ENCODE measurements at regions of chr5 and their contacts with region 1.

Region 1: DNA sequence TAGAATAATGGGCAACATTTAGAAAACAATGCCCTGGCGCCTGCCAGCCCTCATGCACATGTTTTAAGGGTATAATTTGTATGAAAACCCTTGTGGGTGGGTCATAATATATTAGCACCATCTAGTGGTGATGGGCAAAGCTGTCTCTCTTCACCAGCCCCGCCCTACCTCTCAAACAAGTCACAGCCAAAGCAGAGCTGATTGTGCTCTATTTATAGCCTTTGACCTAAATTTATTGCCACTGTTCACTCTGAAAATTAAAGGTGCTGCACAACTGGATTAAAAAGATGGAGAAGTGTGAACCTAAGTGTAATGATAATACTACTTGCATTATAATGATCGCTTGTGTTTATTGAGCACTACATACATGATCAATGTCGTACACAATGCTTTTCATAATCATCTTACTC is 131.9 kb upstream of the ANKH start:
- DNase-seq: peak; percentile 68
- H3K4me3 Mint-ChIP-seq: no peak overlapping the region
- H3K27ac Mint-ChIP-seq: no peak overlapping the region
- H3K4me1 Mint-ChIP-seq: peaks cover 6% of the 10 kb centered on the region
- H3K27me3 Mint-ChIP-seq: peaks cover 2% of the 10 kb centered on the region

Region 2: GRCh38 chr5:14364576-14365472 is 638.7 kb before region 1 on chr5:
- CTCF ChIA-PET with region 1: no interaction called
- POLR2A ChIA-PET with region 1: no interaction called
- intact Hi-C with region 1: loop called (anchors 5 kb)
- DNase-seq: peak; percentile 19
- H3K4me3 Mint-ChIP-seq: no peak overlapping the region
- H3K27ac Mint-ChIP-seq: no peak overlapping the region
- H3K4me1 Mint-ChIP-seq: peaks cover 18% of the 10 kb centered on the region
- H3K27me3 Mint-ChIP-seq: no peaks in the 10 kb centered on the region

Region 3: DNA sequence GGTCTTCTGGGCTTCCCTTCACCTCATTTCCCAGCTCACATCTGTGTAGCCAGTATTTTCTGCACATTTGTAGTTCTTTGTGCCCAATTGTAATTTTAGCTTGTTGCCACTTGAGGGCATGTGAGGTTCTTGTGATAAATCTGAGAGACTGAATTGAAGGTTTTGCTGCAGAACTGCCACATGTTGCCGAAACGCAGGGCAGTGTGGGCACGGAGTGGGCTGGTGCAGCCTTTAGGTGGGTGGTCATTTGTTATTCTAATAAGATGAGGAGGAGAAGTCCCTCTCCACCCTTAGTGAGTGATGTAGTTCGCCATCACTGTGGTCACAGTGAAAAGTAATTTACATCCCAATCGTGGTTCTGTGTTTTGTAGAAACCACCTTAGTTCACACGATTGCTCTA is 317.8 kb before region 1 on chr5:
- CTCF ChIA-PET with region 1: interaction called, 42 read pairs
- POLR2A ChIA-PET with region 1: no interaction called
- intact Hi-C with region 1: loop called (anchors 1 kb)
- DNase-seq: peak; percentile 71
- H3K4me3 Mint-ChIP-seq: no peak overlapping the region
- H3K27ac Mint-ChIP-seq: peak overlapping the region; percentile 59
- H3K4me1 Mint-ChIP-seq: peaks cover 15% of the 10 kb centered on the region
- H3K27me3 Mint-ChIP-seq: no peaks in the 10 kb centered on the region

Region 4: DNA sequence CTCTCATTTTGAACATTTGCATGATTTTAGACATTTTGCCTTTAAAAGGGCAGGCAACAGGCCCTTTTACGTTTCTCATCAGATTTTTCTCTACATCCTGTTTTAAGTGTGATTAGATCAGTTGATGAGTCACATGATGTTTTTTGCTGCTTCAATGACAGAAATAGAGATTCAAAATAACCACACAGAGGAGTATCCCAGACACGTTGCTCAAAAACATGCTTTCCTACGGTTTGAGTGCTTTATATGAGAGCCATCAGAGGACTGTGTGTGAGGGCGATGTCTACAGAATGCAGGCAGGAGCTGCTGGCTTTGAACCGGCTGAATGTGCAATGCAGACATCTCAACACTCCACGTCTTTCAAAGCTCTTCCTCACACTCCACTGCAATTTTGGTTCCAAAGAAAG is 296.9 kb before region 1 on chr5:
- CTCF ChIA-PET with region 1: interaction called, 6 read pairs
- POLR2A ChIA-PET with region 1: no interaction called
- intact Hi-C with region 1: loop called (anchors 5 kb)
- DNase-seq: peak; percentile 56
- H3K4me3 Mint-ChIP-seq: peak overlapping the region; percentile 57
- H3K27ac Mint-ChIP-seq: peak overlapping the region; percentile 94
- H3K4me1 Mint-ChIP-seq: peaks cover 74% of the 10 kb centered on the region
- H3K27me3 Mint-ChIP-seq: no peaks in the 10 kb centered on the region

Region 5: GRCh38 chr5:14790220-14790619 is 213.3 kb before region 1 on chr5:
- CTCF ChIA-PET with region 1: no interaction called
- POLR2A ChIA-PET with region 1: no interaction called
- intact Hi-C with region 1: no loop called
- DNase-seq: no peak
- H3K4me3 Mint-ChIP-seq: no peak overlapping the region
- H3K27ac Mint-ChIP-seq: no peak overlapping the region
- H3K4me1 Mint-ChIP-seq: peaks cover 35% of the 10 kb centered on the region
- H3K27me3 Mint-ChIP-seq: no peaks in the 10 kb centered on the region

Region 6: DNA sequence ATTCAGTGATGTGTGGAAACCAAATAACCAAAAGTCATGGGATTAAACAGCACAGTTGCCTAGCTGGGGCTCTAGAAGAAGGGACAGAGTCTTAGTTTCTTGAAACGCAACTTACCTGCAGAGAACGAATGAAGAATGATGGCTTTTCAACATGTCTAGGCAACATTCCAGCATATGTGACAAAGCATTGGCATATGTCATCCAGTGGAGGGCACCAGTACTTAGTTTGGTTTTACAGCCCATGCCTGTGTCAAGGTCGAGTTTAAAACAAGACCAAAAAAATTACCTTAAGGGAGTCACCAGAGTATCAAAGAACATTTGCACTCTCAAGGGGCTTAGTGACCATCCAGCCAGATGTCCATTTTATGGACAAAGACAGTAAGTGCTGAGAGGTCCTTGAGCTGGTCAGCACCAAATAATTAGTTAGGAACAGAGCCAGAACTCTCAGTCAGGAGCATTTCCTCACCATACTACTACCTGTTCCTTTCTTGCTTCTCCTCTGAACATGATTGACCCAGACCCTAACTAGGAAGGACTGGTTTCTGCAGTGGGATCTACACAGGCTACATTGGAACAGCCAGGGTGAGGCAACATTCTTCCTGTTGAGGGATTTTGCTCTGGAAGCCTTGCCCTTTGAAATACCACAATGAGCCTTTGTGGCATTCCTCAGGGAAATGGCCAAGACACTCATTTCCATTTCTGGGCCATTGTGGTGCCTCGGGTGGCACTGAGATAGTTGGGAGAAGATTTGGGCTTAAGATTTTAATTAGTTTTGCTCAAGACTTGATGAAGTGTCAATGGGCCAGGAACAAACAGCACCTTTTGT is 56.5 kb before region 1 on chr5:
- CTCF ChIA-PET with region 1: interaction called, 6 read pairs
- POLR2A ChIA-PET with region 1: no interaction called
- intact Hi-C with region 1: loop called (anchors 1 kb)
- DNase-seq: peak; percentile 42
- H3K4me3 Mint-ChIP-seq: no peak overlapping the region
- H3K27ac Mint-ChIP-seq: peak overlapping the region; percentile 26
- H3K4me1 Mint-ChIP-seq: peaks cover 15% of the 10 kb centered on the region
- H3K27me3 Mint-ChIP-seq: peaks cover 7% of the 10 kb centered on the region

Region 7: DNA sequence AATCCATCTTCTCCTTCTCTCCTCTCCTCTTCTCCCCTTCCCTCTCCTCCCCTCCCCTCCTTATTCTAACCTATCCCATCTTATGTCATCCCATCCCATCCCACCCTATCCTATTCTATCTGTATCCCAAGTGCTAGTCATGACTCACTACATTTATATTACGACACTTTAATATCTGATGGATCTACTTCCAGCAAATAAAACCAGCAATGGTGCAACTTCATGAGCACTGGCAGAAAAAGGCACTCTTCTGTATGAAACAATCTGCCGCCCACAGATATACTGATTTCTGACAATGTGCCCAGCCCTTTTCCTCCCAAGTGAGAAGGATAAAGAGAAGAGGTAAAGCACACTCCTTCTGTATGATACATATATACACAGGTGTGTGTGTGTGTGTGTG is 45.3 kb before region 1 on chr5:
- CTCF ChIA-PET with region 1: interaction called, 10 read pairs
- POLR2A ChIA-PET with region 1: no interaction called
- intact Hi-C with region 1: loop called (anchors 1 kb)
- DNase-seq: no peak
- H3K4me3 Mint-ChIP-seq: no peak overlapping the region
- H3K27ac Mint-ChIP-seq: no peak overlapping the region
- H3K4me1 Mint-ChIP-seq: no peaks in the 10 kb centered on the region
- H3K27me3 Mint-ChIP-seq: no peaks in the 10 kb centered on the region

Measured in activated CD4-positive, alpha-beta memory T cell treated with anti-CD3 and anti-CD28 coated beads for 36 hours (primary cell).